ENCODE measurements at regions of chr11 and their contacts with region 1.

Region 1: DNA sequence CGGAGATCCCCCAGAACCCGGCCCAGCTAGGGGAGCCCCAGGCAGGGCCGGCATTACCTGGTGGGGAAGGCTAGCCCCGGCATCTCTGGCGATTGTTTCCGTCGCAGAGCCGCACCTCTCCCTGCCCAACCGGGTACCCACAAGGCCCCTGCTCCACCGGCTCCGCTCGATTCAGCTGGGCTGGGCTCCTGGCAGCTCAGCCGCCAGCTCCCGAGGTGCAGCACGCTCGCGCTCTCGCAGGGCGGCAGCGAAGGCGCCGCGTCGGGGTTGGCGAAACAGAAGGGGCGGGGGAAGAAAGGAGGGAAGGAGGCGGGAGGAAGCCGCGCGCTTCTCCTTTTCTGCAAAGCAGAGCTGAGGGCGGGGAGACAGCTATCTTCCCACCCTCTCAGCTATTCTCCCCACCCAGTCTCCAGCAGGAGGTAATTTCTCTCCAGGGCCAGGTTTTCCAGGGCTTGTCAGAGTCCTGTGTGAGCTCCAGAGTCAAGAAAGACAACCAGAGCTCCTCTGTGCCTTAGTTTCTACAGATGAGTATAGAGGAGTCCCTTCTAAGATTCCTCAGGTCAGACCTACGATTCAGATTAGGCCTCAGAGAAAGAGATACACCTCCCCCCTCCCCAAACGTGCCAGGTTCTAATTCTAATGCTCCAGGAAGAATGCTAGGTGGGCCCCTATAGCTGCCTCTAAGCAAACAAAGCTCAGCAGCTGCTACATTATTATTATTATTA is 62.0 kb downstream of the PAK1 start:
- DNase-seq: peak; percentile 90
- H3K4me3 Mint-ChIP-seq: peak overlapping the region; percentile 90
- H3K27ac Mint-ChIP-seq: peak overlapping the region; percentile 87
- H3K4me1 Mint-ChIP-seq: peaks cover 37% of the 10 kb centered on the region
- H3K27me3 Mint-ChIP-seq: no peaks in the 10 kb centered on the region
- CTCF ChIP-seq: no peak

Region 2: DNA sequence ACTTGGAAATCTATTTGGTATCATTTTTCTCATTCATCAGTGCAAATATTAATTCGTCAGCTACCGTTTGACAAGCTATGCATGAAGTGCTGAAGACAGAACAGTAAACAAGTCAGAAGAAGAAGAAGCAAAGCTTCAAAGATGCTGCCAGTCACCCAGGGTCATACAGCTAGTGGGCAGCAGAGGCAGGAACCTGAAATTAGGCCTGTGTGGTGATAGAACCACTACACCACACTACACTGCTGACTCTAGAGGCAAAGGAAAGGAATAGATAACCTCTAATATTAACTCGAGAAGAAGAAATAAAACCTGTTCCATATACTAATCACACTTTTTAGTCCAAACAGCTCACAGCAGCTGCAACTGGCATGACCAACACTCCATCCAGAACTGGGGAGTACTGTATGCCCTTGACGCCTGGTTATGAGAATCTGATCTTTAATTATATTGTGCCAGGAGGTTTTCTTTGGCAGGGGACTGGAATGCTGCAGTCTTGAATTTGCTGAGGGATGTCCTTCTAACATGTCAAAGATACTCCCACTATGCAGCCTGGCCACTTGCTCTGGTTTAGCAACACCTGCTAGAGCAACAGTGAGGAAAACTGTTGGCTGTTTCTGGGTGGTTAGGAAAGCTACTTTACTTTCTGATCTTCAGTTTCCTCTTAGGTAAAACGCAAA is 11.0 kb before region 1 on chr11:
- CTCF ChIA-PET with region 1: interaction called, 4 read pairs
- POLR2A ChIA-PET with region 1: interaction called, 24 read pairs
- intact Hi-C with region 1: no loop called
- DNase-seq: no peak
- H3K4me3 Mint-ChIP-seq: no peak overlapping the region
- H3K27ac Mint-ChIP-seq: peak overlapping the region; percentile 37
- H3K4me1 Mint-ChIP-seq: peaks cover 32% of the 10 kb centered on the region
- H3K27me3 Mint-ChIP-seq: no peaks in the 10 kb centered on the region
- CTCF ChIP-seq: no peak